ENCODE measurements at regions of chr3 and their contacts with region 1.

Region 1: DNA sequence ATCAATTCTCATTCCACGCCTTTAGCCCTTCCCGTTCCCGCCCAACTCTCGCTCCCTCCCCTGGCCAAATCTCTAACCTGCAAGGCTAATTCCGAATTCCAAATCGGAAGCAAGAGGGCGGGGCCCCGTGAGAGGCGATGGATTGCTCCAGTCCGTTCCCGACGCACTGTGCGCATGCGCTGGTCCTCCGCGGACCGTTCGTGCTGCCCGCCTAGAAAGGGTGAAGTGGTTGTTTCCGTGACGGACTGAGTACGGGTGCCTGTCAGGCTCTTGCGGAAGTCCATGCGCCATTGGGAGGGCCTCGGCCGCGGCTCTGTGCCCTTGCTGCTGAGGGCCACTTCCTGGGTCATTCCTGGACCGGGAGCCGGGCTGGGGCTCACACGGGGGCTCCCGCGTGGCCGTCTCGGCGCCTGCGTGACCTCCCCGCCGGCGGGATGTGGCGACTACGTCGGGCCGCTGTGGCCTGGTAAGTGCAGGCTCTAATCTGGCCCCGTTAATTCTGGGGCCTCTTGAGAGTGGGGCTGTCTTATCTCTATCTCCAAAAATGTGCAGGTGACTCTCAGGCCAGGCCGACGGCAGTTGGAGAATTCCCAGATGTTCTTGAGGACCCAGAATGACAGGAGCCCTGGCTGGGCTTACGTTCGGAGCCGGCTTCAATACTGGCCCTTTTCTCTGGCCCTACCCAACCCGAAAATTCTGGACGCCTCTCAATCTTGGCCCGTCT is at the start of gene OPA1:
- DNase-seq: peak; percentile 90
- H3K4me3 Mint-ChIP-seq: peak within 1 kb of the TSS; percentile 99
- H3K27ac Mint-ChIP-seq: peak within 1 kb of the TSS; percentile 100
- H3K4me1 Mint-ChIP-seq: peaks cover 37% of the 10 kb centered on the region
- H3K27me3 Mint-ChIP-seq: no peaks in the 10 kb centered on the region
- total RNA-seq, gene OPA1: 105 and 118 TPM in 2 replicates

Region 2: DNA sequence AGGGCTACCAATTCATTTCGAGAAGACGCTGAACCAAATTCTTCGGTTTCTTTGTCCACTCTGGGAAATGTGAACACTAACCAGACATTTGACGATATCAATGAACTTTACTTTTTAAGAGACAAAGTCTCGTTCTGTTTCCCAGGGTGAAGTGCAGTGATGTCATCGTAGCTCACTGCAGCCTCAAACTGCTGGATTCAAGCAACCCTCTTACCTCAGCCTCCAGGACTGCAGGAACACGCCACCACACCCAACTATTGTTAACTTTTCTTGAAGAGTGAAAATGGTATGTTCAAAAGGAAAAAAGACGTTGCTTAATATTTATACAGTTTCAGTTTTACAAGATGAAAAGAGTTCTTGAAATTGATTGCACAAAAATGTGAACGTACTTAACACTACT is 706.1 kb before region 1 on chr3:
- intact Hi-C with region 1: loop called (anchors 1 kb)
- DNase-seq: no peak
- H3K4me3 Mint-ChIP-seq: peak overlapping the region; percentile 17
- H3K27ac Mint-ChIP-seq: peak overlapping the region; percentile 75
- H3K4me1 Mint-ChIP-seq: peaks cover 55% of the 10 kb centered on the region
- H3K27me3 Mint-ChIP-seq: peaks cover 2% of the 10 kb centered on the region

Region 3: GRCh38 chr3:193605876-193606275 is 12.8 kb after region 1 on chr3:
- intact Hi-C with region 1: loop called (anchors 1 kb)
- DNase-seq: peak; percentile 17
- H3K4me3 Mint-ChIP-seq: no peak overlapping the region
- H3K27ac Mint-ChIP-seq: no peak overlapping the region
- H3K4me1 Mint-ChIP-seq: peaks cover 9% of the 10 kb centered on the region
- H3K27me3 Mint-ChIP-seq: no peaks in the 10 kb centered on the region

Region 4: GRCh38 chr3:193617628-193618027 is 24.5 kb after region 1 on chr3:
- intact Hi-C with region 1: no loop called
- DNase-seq: no peak
- H3K4me3 Mint-ChIP-seq: no peak overlapping the region
- H3K27ac Mint-ChIP-seq: no peak overlapping the region
- H3K4me1 Mint-ChIP-seq: peaks cover 45% of the 10 kb centered on the region
- H3K27me3 Mint-ChIP-seq: no peaks in the 10 kb centered on the region

Measured in activated T-helper 2 cell treated with anti-CD3 and anti-CD28 coated beads, Interferon-gamma antibody, Interleukin-2, Interleukin-4, amounts not matched to agents 10 μg/mL and 5 μg/mL and 100 μg/mL, durations not matched to agents 14 hours and 24 hours and 36 hours (primary cell).